ENCODE measurements at regions of chr6 and their contacts with region 1.

Region 1: DNA sequence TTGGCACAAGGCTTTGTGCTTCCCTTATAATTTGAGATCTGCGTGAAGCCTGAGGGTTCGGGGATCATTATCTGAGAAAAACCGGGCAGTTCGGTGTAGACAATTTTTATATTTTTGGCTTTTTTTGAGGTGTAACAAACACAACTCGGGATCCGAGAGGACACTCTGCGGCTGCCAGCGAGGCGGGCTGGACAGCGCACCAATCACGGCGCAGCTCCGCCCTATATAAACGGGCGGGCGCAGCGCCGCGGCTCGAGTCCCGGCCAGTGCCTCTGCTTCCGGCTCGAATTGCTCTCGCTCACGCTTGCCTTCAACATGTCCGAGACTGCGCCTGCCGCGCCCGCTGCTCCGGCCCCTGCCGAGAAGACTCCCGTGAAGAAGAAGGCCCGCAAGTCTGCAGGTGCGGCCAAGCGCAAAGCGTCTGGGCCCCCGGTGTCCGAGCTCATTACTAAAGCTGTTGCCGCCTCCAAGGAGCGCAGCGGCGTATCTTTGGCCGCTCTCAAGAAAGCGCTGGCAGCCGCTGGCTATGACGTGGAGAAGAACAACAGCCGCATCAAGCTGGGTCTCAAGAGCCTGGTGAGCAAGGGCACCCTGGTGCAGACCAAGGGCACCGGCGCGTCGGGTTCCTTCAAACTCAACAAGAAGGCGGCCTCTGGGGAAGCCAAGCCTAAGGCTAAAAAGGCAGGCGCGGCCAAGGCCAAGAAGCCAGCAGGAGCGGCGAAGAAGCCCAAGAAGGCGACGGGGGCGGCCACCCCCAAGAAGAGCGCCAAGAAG is 69.0 kb downstream of the HFE start:
- DNase-seq: peak; percentile 91
- ATAC-seq: peak; percentile 39
- H3K4me3 Mint-ChIP-seq: peak overlapping the region; percentile 86
- H3K27ac Mint-ChIP-seq: peak overlapping the region; percentile 97
- H3K4me1 Mint-ChIP-seq: peaks cover 32% of the 10 kb centered on the region
- H3K27me3 Mint-ChIP-seq: no peaks in the 10 kb centered on the region

Region 2: GRCh38 chr6:25829375-25829774 is 326.9 kb before region 1 on chr6:
- CTCF ChIA-PET with region 1: no interaction called
- POLR2A ChIA-PET with region 1: no interaction called
- intact Hi-C with region 1: no loop called
- DNase-seq: no peak
- ATAC-seq: peak; percentile 99
- H3K4me3 Mint-ChIP-seq: no peak overlapping the region
- H3K27ac Mint-ChIP-seq: no peak overlapping the region
- H3K4me1 Mint-ChIP-seq: peaks cover 10% of the 10 kb centered on the region
- H3K27me3 Mint-ChIP-seq: peaks cover 29% of the 10 kb centered on the region

Region 3: DNA sequence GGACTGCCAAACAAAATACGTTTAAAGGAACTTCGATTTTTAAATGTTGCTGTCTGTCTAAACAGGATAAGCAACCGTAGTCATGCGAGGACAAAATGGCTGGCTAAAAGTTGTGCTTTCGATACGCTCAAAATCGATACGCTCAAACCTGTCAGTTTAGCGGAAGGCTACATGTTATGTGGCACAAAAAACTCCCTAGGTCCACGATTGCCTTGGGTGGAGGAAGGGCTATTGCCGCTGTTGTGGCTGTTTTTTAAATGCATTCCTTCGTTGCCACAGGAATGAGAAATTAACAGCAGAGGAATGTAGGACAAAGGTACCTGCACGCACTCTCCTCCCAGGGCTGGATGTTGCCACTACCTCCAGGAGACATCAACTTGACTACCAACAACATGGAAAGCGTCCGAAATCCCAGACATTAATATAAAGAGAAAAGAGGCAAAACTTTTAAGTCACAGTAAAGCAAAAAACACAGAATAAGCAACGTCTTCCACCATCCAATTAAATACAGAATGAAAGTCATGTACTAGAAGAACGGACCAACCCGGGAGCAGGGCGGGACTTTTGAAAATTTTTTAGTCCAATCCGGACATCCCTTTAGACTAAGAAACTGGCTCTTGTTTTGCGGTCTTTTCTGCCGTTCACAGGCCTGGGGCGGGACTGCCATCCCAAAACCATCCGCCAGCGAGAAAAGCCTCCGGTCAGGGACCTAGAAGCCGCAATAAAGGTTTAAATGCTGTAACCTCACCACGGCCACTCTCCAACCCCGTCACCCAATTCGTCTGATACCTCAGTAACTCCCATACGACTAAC is 101.2 kb before region 1 on chr6:
- CTCF ChIA-PET with region 1: interaction called, 4 read pairs
- POLR2A ChIA-PET with region 1: interaction called, 35 read pairs
- intact Hi-C with region 1: loop called (anchors 1 to 2 kb)
- DNase-seq: peak; percentile 91
- ATAC-seq: peak; percentile 70
- H3K4me3 Mint-ChIP-seq: peak overlapping the region; percentile 96
- H3K27ac Mint-ChIP-seq: peak overlapping the region; percentile 99
- H3K4me1 Mint-ChIP-seq: peaks cover 13% of the 10 kb centered on the region
- H3K27me3 Mint-ChIP-seq: no peaks in the 10 kb centered on the region

Region 4: GRCh38 chr6:26141378-26141904 is 14.8 kb before region 1 on chr6:
- CTCF ChIA-PET with region 1: interaction called, 8 read pairs
- POLR2A ChIA-PET with region 1: interaction called, 13 read pairs
- intact Hi-C with region 1: no loop called
- DNase-seq: no peak
- ATAC-seq: no peak
- H3K4me3 Mint-ChIP-seq: no peak overlapping the region
- H3K27ac Mint-ChIP-seq: no peak overlapping the region
- H3K4me1 Mint-ChIP-seq: no peaks in the 10 kb centered on the region
- H3K27me3 Mint-ChIP-seq: no peaks in the 10 kb centered on the region

Region 5: DNA sequence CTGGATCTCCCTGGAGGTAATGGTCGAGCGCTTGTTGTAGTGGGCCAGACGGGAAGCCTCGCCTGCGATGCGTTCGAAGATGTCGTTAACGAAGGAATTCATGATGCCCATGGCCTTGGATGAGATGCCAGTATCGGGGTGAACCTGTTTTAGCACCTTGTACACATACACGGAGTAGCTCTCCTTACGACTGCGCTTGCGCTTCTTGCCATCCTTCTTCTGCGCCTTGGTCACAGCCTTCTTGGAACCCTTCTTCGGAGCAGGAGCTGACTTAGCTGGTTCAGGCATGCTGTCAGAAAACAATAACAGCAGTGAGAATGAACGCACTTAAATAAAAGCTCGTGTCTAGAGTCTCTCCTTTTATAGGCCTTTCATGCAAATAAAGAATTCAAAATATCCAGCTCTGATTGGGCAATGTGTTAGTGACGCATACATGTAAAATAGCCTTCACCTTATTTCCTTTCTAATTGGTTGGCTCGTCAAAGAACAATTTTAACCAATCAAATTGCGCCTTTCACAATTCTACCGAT is 60.2 kb after region 1 on chr6:
- CTCF ChIA-PET with region 1: interaction called, 5 read pairs
- POLR2A ChIA-PET with region 1: interaction called, 119 read pairs
- intact Hi-C with region 1: loop called (anchors 1 kb)
- DNase-seq: peak; percentile 88
- ATAC-seq: peak; percentile 76
- H3K4me3 Mint-ChIP-seq: no peak overlapping the region
- H3K27ac Mint-ChIP-seq: no peak overlapping the region
- H3K4me1 Mint-ChIP-seq: peaks cover 2% of the 10 kb centered on the region
- H3K27me3 Mint-ChIP-seq: no peaks in the 10 kb centered on the region

Region 6: GRCh38 chr6:26270903-26271667 is 114.8 kb after region 1 on chr6:
- CTCF ChIA-PET with region 1: no interaction called
- POLR2A ChIA-PET with region 1: interaction called, 62 read pairs
- intact Hi-C with region 1: loop called (anchors 1 to 2 kb)
- DNase-seq: peak; percentile 85
- ATAC-seq: peak; percentile 43
- H3K4me3 Mint-ChIP-seq: no peak overlapping the region
- H3K27ac Mint-ChIP-seq: no peak overlapping the region
- H3K4me1 Mint-ChIP-seq: peaks cover 23% of the 10 kb centered on the region
- H3K27me3 Mint-ChIP-seq: no peaks in the 10 kb centered on the region

Region 7: GRCh38 chr6:27146706-27147505 is 990.6 kb after region 1 on chr6:
- CTCF ChIA-PET with region 1: no interaction called
- POLR2A ChIA-PET with region 1: interaction called, 14 read pairs
- intact Hi-C with region 1: loop called in 1 of 2 experiments (anchors 2 kb)
- DNase-seq: peak; percentile 89
- ATAC-seq: peak; percentile 69
- H3K4me3 Mint-ChIP-seq: no peak overlapping the region
- H3K27ac Mint-ChIP-seq: no peak overlapping the region
- H3K4me1 Mint-ChIP-seq: peaks cover 11% of the 10 kb centered on the region
- H3K27me3 Mint-ChIP-seq: no peaks in the 10 kb centered on the region

Measured in activated CD4-positive, alpha-beta T cell treated with anti-CD3 and anti-CD28 coated beads for 36 hours (primary cell).